ENCODE measurements at regions of chr16 and their contacts with region 1.

Region 1: GRCh38 chr16:85479972-85480751 is 133.0 kb upstream of the GSE1 start:
- DNase-seq: peak; percentile 59 to 68
- H3K4me3 ChIP-seq: peak overlapping the region; percentile 31; the same call in 1 of the 2 replicates
- H3K27ac ChIP-seq: peak overlapping the region; percentile 6; the same call in 1 of the 2 replicates
- H3K4me1 ChIP-seq: peaks cover 22% of the 10 kb centered on the region
- H3K27me3 ChIP-seq: no peaks in the 10 kb centered on the region
- CTCF ChIP-seq: peak; percentile 64

Region 2: GRCh38 chr16:85369741-85370528 is 110.2 kb before region 1 on chr16:
- CTCF ChIA-PET with region 1: interaction called, 10 read pairs
- POLR2A ChIA-PET with region 1: no interaction called
- intact Hi-C with region 1: no loop called
- DNase-seq: peak in 1 of 2 experiments; percentile 67
- H3K4me3 ChIP-seq: no peak overlapping the region
- H3K27ac ChIP-seq: no peak overlapping the region
- H3K4me1 ChIP-seq: peaks cover 11% of the 10 kb centered on the region
- H3K27me3 ChIP-seq: no peaks in the 10 kb centered on the region
- CTCF ChIP-seq: peak; percentile 92

Region 3: GRCh38 chr16:85393674-85394483 is 86.3 kb before region 1 on chr16:
- CTCF ChIA-PET with region 1: no interaction called
- POLR2A ChIA-PET with region 1: no interaction called
- intact Hi-C with region 1: no loop called
- DNase-seq: no peak
- H3K4me3 ChIP-seq: no peak overlapping the region
- H3K27ac ChIP-seq: no peak overlapping the region
- H3K4me1 ChIP-seq: peaks cover 36% of the 10 kb centered on the region
- H3K27me3 ChIP-seq: no peaks in the 10 kb centered on the region
- CTCF ChIP-seq: peak; percentile 66

Region 4: DNA sequence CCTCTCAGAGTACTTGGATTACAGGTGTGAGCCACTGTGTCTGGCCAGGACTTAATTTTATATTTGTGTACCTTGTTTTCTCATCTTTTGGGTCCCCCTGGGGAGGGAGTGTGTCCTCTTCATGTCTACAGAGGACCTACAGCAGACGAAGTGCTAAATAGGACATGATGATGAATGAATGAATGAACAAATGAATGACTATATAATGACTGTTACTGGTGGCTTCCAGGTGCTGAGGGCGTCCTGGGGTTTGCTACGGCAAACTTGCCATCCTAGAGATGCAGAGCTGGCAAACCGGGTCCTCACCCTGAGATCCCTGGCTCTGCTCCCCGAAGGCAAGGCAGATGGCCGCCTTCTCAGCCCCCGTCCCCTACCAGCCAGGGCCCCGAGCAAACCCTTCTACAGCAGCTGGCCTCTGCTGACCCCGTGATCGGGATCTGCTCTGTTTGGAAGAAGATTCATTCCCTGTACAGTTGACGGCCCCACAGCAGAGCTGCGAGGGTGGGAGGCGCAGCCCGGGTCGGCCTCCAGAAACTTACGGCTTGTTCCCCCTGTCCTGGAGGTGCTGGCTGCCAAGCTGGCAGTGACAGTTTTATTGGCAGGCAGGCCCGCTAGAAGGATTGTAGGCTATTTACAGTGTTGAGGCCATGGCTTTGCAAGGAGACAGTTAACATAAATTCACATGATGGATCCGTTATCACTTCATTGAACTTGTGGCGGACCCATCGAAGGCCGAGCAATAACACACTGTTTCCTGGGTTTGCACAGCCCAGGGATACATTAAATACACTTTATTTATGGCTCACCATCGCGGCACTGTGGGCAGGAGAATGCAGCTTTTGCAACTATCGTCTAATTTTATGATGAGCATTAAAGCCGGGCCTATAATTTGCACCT is 64.7 kb before region 1 on chr16:
- CTCF ChIA-PET with region 1: no interaction called
- POLR2A ChIA-PET with region 1: no interaction called
- intact Hi-C with region 1: no loop called
- DNase-seq: no peak
- H3K4me3 ChIP-seq: no peak overlapping the region
- H3K27ac ChIP-seq: no peak overlapping the region
- H3K4me1 ChIP-seq: no peaks in the 10 kb centered on the region
- H3K27me3 ChIP-seq: no peaks in the 10 kb centered on the region
- CTCF ChIP-seq: no peak

Region 5: GRCh38 chr16:85449198-85449884 is 30.8 kb before region 1 on chr16:
- CTCF ChIA-PET with region 1: no interaction called
- POLR2A ChIA-PET with region 1: no interaction called
- intact Hi-C with region 1: no loop called
- DNase-seq: no peak
- H3K4me3 ChIP-seq: no peak overlapping the region
- H3K27ac ChIP-seq: no peak overlapping the region
- H3K4me1 ChIP-seq: no peaks in the 10 kb centered on the region
- H3K27me3 ChIP-seq: no peaks in the 10 kb centered on the region
- CTCF ChIP-seq: no peak

Region 6: GRCh38 chr16:85528528-85529387 is 48.6 kb after region 1 on chr16:
- CTCF ChIA-PET with region 1: no interaction called
- POLR2A ChIA-PET with region 1: no interaction called
- intact Hi-C with region 1: no loop called
- DNase-seq: no peak
- H3K4me3 ChIP-seq: no peak overlapping the region
- H3K27ac ChIP-seq: no peak overlapping the region
- H3K4me1 ChIP-seq: peaks cover 25% of the 10 kb centered on the region
- H3K27me3 ChIP-seq: no peaks in the 10 kb centered on the region
- CTCF ChIP-seq: peak; percentile 60

Measured in PC-9 (cell line).